Mammary epithelial cell (primary cell): ENCODE measurements at regions of chr15 and their contacts with region 1.

Region 1: DNA sequence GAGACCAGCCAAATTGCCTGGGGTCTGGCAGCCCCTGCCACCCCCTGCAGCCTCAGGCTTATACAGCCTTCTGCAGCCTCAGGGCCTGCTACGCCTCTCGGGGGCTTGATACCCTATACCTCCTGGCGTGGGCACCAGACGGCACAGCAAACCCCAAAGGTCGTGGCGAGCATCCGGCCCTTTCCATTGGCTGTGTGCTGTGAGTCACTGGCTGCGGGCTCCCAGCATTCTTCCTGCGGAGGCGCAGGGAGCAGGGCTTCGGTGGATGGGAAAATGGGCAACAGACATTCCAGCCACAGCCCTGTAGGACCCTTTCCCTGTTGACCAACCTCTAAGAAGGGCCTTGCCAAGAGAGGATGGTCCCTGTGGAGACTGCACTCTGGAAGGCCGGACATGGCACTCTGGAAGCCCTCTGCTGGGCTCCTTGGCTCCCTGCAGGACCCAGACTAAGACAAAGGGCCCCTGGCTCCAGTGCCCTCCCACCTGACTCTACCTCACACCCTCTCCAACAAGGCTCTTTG is 59.6 kb downstream of the ITGA11 start:
- DNase-seq: peak; percentile 20
- H3K4me3 ChIP-seq: no peak overlapping the region
- H3K27ac ChIP-seq: no peak overlapping the region
- H3K4me1 ChIP-seq: no peaks in the 10 kb centered on the region
- H3K27me3 ChIP-seq: no peaks in the 10 kb centered on the region
- CTCF ChIP-seq: peak; percentile 51 to 67

Region 2: GRCh38 chr15:68328443-68328842 is 43.9 kb before region 1 on chr15:
- CTCF ChIA-PET with region 1: interaction called, 13 read pairs
- dilution Hi-C with region 1: no loop called
- in situ Hi-C with region 1: no loop called
- intact Hi-C with region 1: no loop called
- DNase-seq: no peak
- H3K4me3 ChIP-seq: no peak overlapping the region
- H3K27ac ChIP-seq: no peak overlapping the region
- H3K4me1 ChIP-seq: peaks cover 1% of the 10 kb centered on the region
- H3K27me3 ChIP-seq: no peaks in the 10 kb centered on the region
- CTCF ChIP-seq: no peak